IMR-90 (cell line): ENCODE measurements at regions of chr10 and their contacts with region 1.

Region 1: GRCh38 chr10:14074057-14074884 is 256.5 kb downstream of the FRMD4A start:
- DNase-seq: peak; percentile 100
- ATAC-seq: peak; percentile 96
- H3K4me3 ChIP-seq: no peak overlapping the region
- H3K27ac ChIP-seq: peak overlapping the region; percentile 86
- H3K4me1 ChIP-seq: peaks cover 6% of the 10 kb centered on the region
- H3K27me3 ChIP-seq: no peaks in the 10 kb centered on the region
- CTCF ChIP-seq: no peak
- POLR2A ChIP-seq: no peak
- RAD21 ChIP-seq: no peak; the same call in 1 of the 2 replicates

Region 2: GRCh38 chr10:13971601-13972475 is 102.4 kb before region 1 on chr10:
- CTCF ChIA-PET with region 1: no interaction called
- POLR2A ChIA-PET with region 1: no interaction called
- dilution Hi-C with region 1: no loop called
- in situ Hi-C with region 1: no loop called
- intact Hi-C with region 1: loop called (anchors 5 kb)
- DNase-seq: peak; percentile 86
- ATAC-seq: peak; percentile 57
- H3K4me3 ChIP-seq: no peak overlapping the region
- H3K27ac ChIP-seq: peak overlapping the region; percentile 70; the same call in 1 of the 2 replicates
- H3K4me1 ChIP-seq: peaks cover 28% of the 10 kb centered on the region
- H3K27me3 ChIP-seq: no peaks in the 10 kb centered on the region
- CTCF ChIP-seq: no peak
- POLR2A ChIP-seq: no peak
- RAD21 ChIP-seq: no peak

Region 3: GRCh38 chr10:14039968-14040671 is 34.2 kb before region 1 on chr10:
- CTCF ChIA-PET with region 1: no interaction called
- POLR2A ChIA-PET with region 1: no interaction called
- dilution Hi-C with region 1: no loop called
- in situ Hi-C with region 1: no loop called
- intact Hi-C with region 1: loop called (anchors 1 kb)
- DNase-seq: peak; percentile 80
- ATAC-seq: peak; percentile 89
- H3K4me3 ChIP-seq: no peak overlapping the region
- H3K27ac ChIP-seq: peak overlapping the region; percentile 97
- H3K4me1 ChIP-seq: peaks cover 6% of the 10 kb centered on the region
- H3K27me3 ChIP-seq: no peaks in the 10 kb centered on the region
- CTCF ChIP-seq: no peak
- POLR2A ChIP-seq: no peak
- RAD21 ChIP-seq: no peak

Region 4: GRCh38 chr10:14084875-14085274 is 10.6 kb after region 1 on chr10:
- CTCF ChIA-PET with region 1: no interaction called
- POLR2A ChIA-PET with region 1: no interaction called
- dilution Hi-C with region 1: no loop called
- in situ Hi-C with region 1: no loop called
- intact Hi-C with region 1: no loop called
- DNase-seq: peak; percentile 52
- ATAC-seq: peak; percentile 24
- H3K4me3 ChIP-seq: no peak overlapping the region
- H3K27ac ChIP-seq: no peak overlapping the region
- H3K4me1 ChIP-seq: peaks cover 16% of the 10 kb centered on the region
- H3K27me3 ChIP-seq: peaks cover 3% of the 10 kb centered on the region; the same call in 1 of the 2 replicates
- CTCF ChIP-seq: no peak
- POLR2A ChIP-seq: no peak
- RAD21 ChIP-seq: no peak

Region 5: GRCh38 chr10:14102056-14102455 is 27.8 kb after region 1 on chr10:
- CTCF ChIA-PET with region 1: no interaction called
- POLR2A ChIA-PET with region 1: no interaction called
- dilution Hi-C with region 1: no loop called
- in situ Hi-C with region 1: no loop called
- intact Hi-C with region 1: no loop called
- DNase-seq: peak; percentile 51
- ATAC-seq: no peak
- H3K4me3 ChIP-seq: no peak overlapping the region
- H3K27ac ChIP-seq: no peak overlapping the region
- H3K4me1 ChIP-seq: no peaks in the 10 kb centered on the region
- H3K27me3 ChIP-seq: no peaks in the 10 kb centered on the region
- CTCF ChIP-seq: no peak
- POLR2A ChIP-seq: no peak
- RAD21 ChIP-seq: no peak